ENCODE measurements at regions of chr4 and their contacts with region 1.

Region 1: DNA sequence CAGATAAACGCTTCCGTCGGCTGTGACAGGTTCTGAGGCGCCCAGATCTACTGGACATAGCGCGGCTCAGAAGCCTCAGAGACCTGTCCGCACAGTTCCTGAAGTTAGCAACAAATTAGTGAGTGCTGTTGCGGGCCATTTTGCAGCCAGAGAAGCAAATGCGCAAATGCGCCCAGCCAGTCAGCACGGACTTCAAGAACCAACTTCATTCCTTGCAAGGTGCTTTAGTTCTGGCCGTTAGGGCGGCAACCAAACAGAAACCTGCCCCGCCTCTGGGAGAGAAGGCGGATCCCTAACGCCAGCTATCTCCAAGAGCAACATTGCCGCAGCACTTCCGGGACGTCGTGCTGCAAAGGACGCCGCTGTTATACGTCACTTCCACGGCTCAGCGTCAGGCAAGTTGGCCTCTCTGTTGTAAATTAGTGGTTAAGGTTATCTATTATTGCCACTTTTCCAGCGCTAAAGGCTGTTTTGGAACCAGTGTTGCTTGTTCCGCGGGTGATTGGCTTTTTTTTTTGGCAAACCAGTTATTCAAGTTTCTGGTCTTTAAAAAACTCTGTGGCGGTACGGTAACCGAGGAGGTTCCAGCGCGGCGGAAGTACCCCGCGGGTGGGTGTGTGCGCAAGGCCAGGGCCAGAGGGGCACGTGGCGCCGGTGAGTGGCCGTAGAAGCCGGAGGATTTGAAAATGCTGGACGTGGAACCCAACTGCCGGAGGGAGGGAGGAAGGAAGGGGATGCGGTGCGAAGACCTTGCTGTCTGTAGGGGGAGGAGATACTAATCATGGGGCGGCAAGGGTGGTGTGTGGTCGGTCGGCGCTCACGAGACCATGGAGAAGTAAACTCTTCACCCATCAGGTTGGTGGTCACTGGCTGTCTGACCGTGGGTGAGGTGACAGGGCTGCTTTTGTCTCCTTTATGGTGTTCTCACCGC is at the start of gene GAR1:
- DNase-seq: peak; percentile 88 to 92
- H3K4me3 ChIP-seq: peak within 1 kb of the TSS; percentile 88
- H3K4me3 Mint-ChIP-seq: peak within 1 kb of the TSS; percentile 90
- H3K27ac Mint-ChIP-seq: peak within 1 kb of the TSS; percentile 97
- H3K4me1 ChIP-seq: no peaks in the 10 kb centered on the region; the same call in 1 of the 2 replicates
- H3K4me1 Mint-ChIP-seq: peaks cover 23% of the 10 kb centered on the region
- H3K27me3 ChIP-seq: no peaks in the 10 kb centered on the region
- H3K27me3 Mint-ChIP-seq: peaks cover 2% of the 10 kb centered on the region
- CTCF ChIP-seq: no peak
- total RNA-seq, gene GAR1: 30.8 and 31.6 TPM in 2 replicates

Region 2: DNA sequence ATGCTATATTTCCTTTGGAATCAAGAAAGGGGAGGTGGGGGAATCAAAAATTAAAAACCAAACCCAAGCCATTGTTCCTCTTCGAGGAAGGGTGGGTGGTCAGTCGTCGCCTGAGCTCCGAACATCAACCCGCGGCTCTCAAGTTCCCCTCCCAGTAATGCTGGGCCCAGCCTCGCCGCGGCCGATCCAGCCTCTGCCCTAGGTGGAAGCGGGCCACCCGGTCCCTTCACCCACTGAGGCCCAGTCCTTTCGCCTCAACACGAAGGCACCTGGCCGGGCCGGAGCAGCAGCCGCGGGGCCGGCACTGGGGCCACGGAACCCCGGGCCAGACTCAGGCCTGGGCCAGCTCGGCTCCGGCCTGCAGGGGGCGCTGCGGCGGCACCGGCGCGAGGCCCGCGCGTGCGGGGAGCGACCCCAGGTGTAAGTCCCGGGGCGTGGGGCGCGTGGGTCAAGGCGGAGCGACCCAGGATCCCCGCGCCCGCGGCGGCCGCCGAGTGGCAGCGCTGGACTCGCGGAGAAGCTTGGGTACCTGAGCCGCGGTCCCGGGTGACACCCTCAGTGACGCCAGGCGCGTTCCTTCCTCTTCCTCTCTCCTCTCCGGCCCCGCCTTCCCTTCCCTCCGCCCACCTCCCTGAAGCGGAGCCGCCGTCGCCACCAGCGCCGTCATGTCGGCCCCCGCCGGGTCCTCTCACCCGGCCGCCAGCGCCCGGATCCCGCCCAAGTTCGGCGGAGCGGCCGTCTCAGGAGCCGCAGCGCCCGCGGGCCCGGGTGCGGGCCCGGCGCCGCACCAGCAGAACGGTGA is 382.0 kb before region 1 on chr4 and contains the start of gene SEC24B:
- CTCF ChIA-PET with region 1: no interaction called
- POLR2A ChIA-PET with region 1: no interaction called
- intact Hi-C with region 1: loop called (anchors 5 kb)
- DNase-seq: peak; percentile 86 to 87
- H3K4me3 ChIP-seq: peak within 1 kb of the TSS; percentile 85
- H3K4me3 Mint-ChIP-seq: peak within 1 kb of the TSS; percentile 77
- H3K27ac Mint-ChIP-seq: peak within 1 kb of the TSS; percentile 57
- H3K4me1 ChIP-seq: peaks cover 20% of the 10 kb centered on the region
- H3K4me1 Mint-ChIP-seq: peaks cover 14% of the 10 kb centered on the region
- H3K27me3 ChIP-seq: no peaks in the 10 kb centered on the region
- H3K27me3 Mint-ChIP-seq: no peaks in the 10 kb centered on the region
- CTCF ChIP-seq: peak; percentile 42 to 84
- total RNA-seq, gene SEC24B: 29.0 and 29.5 TPM in 2 replicates

Region 3: DNA sequence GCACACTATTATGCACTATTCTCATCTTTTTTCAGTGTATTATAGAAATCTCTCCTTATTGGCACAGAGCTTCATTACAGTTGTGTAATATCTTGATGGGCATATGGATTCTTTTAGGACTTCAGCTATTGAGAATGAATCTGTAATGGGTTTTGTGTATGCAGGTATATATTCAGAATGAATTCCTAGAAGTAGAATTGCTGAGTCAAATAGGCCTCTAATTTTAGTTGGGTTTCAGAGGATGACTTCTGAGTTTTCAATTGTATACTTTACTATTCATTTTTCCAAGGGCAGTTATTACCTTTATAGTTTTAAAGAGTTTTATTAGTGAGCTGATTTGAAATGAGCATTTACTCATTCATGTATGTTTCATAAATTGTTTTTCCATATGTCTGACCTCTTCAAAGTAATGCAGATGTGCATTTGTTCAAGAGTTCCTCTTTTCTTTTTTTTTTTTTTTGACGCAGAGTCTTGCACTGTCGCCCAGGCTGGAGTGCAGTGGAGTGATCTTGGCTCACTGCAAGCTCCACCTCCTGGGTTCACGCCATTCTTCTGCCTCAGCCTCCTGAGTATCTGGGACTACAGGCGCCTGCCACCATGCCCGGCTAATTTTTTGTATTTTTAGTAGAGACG is 131.7 kb before region 1 on chr4:
- CTCF ChIA-PET with region 1: no interaction called
- POLR2A ChIA-PET with region 1: no interaction called
- intact Hi-C with region 1: no loop called
- DNase-seq: no peak
- H3K4me3 ChIP-seq: no peak overlapping the region
- H3K4me3 Mint-ChIP-seq: no peak overlapping the region
- H3K27ac Mint-ChIP-seq: no peak overlapping the region
- H3K4me1 ChIP-seq: no peaks in the 10 kb centered on the region
- H3K4me1 Mint-ChIP-seq: no peaks in the 10 kb centered on the region
- H3K27me3 ChIP-seq: no peaks in the 10 kb centered on the region
- H3K27me3 Mint-ChIP-seq: no peaks in the 10 kb centered on the region
- CTCF ChIP-seq: no peak

Measured in Caco-2 (cell line).